Endothelial cell of umbilical vein (primary cell): ENCODE measurements at regions of chr5 and their contacts with region 1.

Region 1: DNA sequence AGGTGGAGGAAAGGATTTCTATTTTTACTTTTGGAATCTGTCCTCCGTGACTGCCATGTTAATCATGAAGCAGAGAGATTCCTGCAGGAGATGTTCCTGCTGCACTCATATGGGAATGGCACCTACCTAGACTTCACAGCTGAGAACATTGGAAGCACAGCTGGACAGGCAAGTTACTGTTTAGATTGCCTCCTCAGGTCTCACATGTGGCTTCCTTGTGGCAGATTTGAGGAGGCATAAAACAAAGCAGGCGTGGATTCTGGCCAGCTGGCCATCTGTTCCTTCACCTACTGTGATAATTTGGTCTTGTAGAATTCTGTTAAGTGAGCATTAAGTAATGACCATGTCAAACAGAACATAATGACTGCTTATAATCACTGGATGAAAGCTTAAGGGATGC is 193.4 kb downstream of the EDIL3 start:
- DNase-seq: no peak
- H3K4me3 ChIP-seq: no peak overlapping the region
- H3K27ac ChIP-seq: no peak overlapping the region
- H3K4me1 ChIP-seq: no peaks in the 10 kb centered on the region
- H3K27me3 ChIP-seq: no peaks in the 10 kb centered on the region
- CTCF ChIP-seq: no peak
- POLR2A ChIP-seq: no peak

Region 2: DNA sequence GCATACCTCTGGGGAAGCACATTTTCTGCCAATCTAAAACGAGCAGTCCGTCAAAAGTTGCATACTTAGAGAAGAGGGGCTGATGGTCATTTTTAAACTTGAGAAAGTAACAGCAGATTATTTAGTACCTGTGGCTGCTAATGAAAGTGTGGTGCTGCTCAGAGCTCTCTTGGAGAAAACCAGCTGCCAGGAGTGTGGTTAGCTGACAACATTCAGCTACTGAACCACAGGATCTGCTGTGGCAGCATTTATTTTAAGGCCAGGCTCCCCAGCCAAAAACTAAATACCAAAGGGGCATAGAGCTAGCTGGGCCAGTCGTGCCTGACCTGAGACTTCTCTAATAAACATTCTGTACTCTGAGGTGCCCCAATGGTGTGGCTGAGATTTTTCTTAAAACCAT is 10.2 kb before region 1 on chr5:
- CTCF ChIA-PET with region 1: interaction called, 11 read pairs
- POLR2A ChIA-PET with region 1: no interaction called
- dilution Hi-C with region 1: no loop called
- intact Hi-C with region 1: no loop called
- DNase-seq: no peak
- H3K4me3 ChIP-seq: no peak overlapping the region
- H3K27ac ChIP-seq: no peak overlapping the region
- H3K4me1 ChIP-seq: no peaks in the 10 kb centered on the region
- H3K27me3 ChIP-seq: no peaks in the 10 kb centered on the region
- CTCF ChIP-seq: no peak
- POLR2A ChIP-seq: no peak